ENCODE measurements at regions of chr6 and their contacts with region 1.

Region 1: GRCh38 chr6:108541838-108542759 is 18.6 kb upstream of the FOXO3 start:
- DNase-seq: peak; percentile 81
- H3K4me3 Mint-ChIP-seq: no peak overlapping the region
- H3K27ac Mint-ChIP-seq: no peak overlapping the region
- H3K4me1 Mint-ChIP-seq: peaks cover 15% of the 10 kb centered on the region
- H3K27me3 Mint-ChIP-seq: peaks cover 35% of the 10 kb centered on the region

Region 2: GRCh38 chr6:107679457-107679856 is 862.6 kb before region 1 on chr6:
- CTCF ChIA-PET with region 1: no interaction called
- DNase-seq: no peak
- H3K4me3 Mint-ChIP-seq: no peak overlapping the region
- H3K27ac Mint-ChIP-seq: no peak overlapping the region
- H3K4me1 Mint-ChIP-seq: peaks cover 12% of the 10 kb centered on the region
- H3K27me3 Mint-ChIP-seq: peaks cover 23% of the 10 kb centered on the region

Region 3: DNA sequence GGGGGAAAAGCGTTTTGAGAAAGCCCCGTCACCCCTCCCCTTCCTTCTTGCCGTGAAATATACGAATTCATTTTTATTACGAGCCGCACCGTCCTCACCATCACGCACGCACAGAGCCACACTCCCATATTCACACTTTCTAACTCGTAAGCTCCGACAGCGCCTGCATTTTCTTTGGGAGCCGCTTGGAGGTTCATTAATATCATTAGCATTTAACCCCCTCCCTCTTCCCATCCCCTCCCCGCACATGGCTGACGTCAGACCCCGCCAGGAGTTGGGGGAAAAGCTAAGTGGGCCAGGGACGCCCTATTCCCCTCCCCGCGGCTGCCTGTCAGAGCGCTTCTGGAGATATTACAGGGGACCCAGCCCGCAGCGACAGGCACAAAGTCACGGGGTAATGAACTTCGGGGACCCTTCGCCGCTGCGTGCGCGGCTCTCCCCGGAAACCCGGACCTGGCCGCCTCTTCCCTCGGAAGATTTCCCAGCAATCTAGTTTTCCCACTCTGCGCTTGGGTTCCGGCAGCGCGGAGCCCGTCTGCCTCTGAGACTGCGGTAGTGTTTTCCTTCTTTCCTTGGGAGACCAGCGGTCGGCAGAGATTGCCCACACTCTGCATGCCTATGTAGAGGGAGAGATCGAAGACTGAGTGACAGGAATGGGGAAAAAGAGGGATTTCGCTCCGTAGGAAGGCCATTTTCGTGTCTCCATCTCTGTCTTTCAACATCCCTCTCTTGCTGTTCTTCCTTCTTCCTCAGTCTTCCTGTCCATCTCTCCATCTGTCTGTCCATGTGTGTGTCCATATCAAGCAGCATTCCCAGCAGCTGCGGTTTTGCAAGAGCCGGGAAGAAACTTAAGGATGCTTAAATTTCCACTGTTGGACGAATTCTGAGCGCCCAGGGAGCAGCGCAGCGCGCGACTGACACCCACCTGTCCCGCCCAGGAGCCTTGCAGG is 376.1 kb before region 1 on chr6 and contains the start of gene NR2E1:
- CTCF ChIA-PET with region 1: no interaction called
- DNase-seq: no peak
- H3K4me3 Mint-ChIP-seq: peak within 1 kb of the TSS; percentile 44
- H3K27ac Mint-ChIP-seq: peak within 1 kb of the TSS; percentile 78
- H3K4me1 Mint-ChIP-seq: peaks cover 34% of the 10 kb centered on the region
- H3K27me3 Mint-ChIP-seq: peaks cover 100% of the 10 kb centered on the region

Region 4: DNA sequence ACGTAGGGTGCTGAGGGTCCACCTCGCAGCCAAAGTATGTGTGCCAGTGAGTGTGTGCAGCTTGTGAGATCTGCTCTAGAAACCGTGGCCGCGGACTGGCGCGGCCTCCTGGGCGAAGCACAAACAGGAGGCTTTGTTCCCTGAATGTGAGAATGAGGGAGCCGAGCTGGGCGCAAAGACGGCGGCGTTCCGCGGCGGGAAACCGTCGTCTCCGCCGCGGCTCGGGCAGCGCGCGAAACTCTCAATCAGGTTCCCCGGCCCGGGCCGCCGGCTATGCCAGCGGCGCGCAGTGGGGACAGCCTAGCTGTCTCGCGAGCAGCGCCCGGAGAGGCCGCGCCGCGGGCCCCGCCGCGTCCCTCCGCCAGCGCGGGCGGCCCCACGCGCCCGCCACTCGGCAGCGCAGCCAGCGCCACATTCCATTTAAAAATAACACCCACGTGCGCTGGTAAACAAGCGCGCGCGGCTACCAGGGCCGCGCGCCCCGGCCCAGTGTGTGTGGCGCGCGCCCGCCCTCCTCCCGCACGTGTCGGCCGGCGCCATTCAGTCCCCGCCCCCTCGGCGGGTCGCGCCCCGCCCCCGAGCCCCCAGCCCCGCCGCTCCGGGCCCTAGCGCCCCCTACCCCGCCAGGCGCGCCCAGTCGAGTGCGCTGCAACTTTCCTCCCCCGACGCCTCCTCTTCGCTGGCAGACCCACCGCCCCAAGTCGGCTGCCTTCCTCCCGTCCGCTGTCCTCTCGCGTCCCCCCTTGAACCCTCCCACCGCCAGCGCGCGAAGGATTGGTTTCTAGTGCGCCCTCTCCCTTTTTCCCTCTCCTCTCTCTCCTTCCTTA is 15.7 kb after region 1 on chr6:
- CTCF ChIA-PET with region 1: interaction called, 13 read pairs
- DNase-seq: peak; percentile 82
- H3K4me3 Mint-ChIP-seq: peak overlapping the region; percentile 94
- H3K27ac Mint-ChIP-seq: peak overlapping the region; percentile 99
- H3K4me1 Mint-ChIP-seq: peaks cover 19% of the 10 kb centered on the region
- H3K27me3 Mint-ChIP-seq: peaks cover 60% of the 10 kb centered on the region

Region 5: DNA sequence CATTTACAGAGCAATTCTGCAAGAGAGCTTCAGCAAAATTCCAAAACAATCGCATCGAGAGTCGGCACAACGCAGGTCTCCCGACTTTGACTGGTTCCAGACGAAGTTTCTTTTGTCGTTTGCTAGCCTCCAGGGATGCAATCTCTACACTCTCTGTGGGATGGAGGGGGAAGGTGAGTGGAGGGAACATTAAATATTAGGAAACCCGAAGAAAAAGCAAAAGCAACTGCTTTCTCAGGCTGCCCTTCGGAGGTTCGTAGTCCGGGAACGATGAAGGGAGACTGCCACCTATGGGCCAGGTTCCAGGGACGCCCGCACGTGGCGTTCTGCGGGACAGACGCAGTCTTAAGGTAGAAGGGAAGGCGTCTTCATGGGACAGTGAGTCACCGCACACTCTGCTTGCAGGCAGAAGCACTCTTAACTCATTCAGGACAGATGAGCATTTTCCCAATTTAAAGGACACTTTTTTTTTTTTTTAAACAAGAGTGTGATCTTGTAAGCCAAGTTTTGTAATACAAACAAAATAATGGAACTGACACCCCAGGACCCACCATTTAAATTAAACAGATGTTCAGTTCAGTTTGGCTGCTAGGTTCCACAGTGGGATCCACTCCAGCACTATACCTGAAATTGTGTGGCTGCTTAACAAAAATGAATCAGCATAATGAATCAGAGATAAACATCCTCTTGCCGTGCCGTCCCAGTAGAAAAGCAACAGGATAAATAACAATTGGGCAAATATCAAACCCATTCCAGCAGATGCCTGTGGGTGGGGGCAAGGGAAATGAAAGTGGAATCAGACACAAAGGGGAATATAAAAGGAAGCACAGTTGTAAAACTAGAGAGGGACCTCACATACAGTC is 240.3 kb after region 1 on chr6:
- CTCF ChIA-PET with region 1: interaction called, 23 read pairs
- DNase-seq: peak; percentile 86
- H3K4me3 Mint-ChIP-seq: peak overlapping the region; percentile 69
- H3K27ac Mint-ChIP-seq: no peak overlapping the region
- H3K4me1 Mint-ChIP-seq: peaks cover 13% of the 10 kb centered on the region
- H3K27me3 Mint-ChIP-seq: peaks cover 60% of the 10 kb centered on the region

Region 6: DNA sequence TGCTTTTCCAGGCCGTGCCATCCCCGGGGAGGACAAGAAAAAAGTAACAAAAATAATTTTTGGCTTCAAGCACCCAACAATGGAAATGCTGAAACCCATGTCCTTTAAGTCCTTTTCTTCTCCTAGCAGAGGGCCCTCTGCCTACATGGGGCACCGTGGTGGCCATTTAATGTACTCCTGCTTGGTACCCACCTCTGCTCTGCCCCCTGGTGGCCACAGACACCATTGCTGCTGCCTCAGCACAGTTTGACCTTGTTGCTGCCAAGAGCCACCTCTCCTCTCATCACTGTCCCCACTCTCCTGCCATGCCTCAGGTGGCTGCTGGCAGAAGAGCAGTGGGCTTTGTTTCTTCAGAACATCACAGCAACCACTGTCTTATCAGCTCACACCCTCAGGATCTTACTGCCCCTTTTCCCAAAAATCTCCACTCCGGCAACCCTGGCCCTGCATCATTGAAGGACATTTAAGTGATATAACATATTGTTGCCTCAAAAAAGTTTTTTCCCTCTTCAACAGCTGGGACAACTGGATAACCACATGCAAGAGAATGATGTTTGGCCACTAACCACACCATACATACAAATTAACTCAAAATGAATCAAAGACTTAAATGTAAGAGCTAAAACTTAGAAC is 293.2 kb after region 1 on chr6:
- CTCF ChIA-PET with region 1: interaction called, 18 read pairs
- DNase-seq: peak; percentile 91
- H3K4me3 Mint-ChIP-seq: no peak overlapping the region
- H3K27ac Mint-ChIP-seq: no peak overlapping the region
- H3K4me1 Mint-ChIP-seq: peaks cover 29% of the 10 kb centered on the region
- H3K27me3 Mint-ChIP-seq: peaks cover 40% of the 10 kb centered on the region

Region 7: GRCh38 chr6:108896111-108896661 is 354.1 kb after region 1 on chr6:
- CTCF ChIA-PET with region 1: interaction called, 39 read pairs
- DNase-seq: no peak
- H3K4me3 Mint-ChIP-seq: peak overlapping the region; percentile 22
- H3K27ac Mint-ChIP-seq: peak overlapping the region; percentile 91
- H3K4me1 Mint-ChIP-seq: peaks cover 36% of the 10 kb centered on the region
- H3K27me3 Mint-ChIP-seq: peaks cover 11% of the 10 kb centered on the region

Region 8: GRCh38 chr6:109073344-109074132 is 531.4 kb after region 1 on chr6:
- CTCF ChIA-PET with region 1: interaction called, 90 read pairs
- DNase-seq: peak; percentile 59
- H3K4me3 Mint-ChIP-seq: no peak overlapping the region
- H3K27ac Mint-ChIP-seq: no peak overlapping the region
- H3K4me1 Mint-ChIP-seq: peaks cover 24% of the 10 kb centered on the region
- H3K27me3 Mint-ChIP-seq: peaks cover 4% of the 10 kb centered on the region